Colonic mucosa (tissue), 4 donors: ENCODE measurements at regions of chr1 and their contacts with region 1.

Region 1: GRCh38 chr1:171583581-171584201 is 38.4 kb upstream of the MYOCOS start:
- DNase-seq: no peak
- H3K4me3 ChIP-seq: no peak overlapping the region
- H3K27ac ChIP-seq: no peak overlapping the region
- H3K4me1 ChIP-seq: no peaks in the 10 kb centered on the region
- H3K27me3 ChIP-seq: no peaks in the 10 kb centered on the region
- CTCF ChIP-seq: no peak

Region 2: DNA sequence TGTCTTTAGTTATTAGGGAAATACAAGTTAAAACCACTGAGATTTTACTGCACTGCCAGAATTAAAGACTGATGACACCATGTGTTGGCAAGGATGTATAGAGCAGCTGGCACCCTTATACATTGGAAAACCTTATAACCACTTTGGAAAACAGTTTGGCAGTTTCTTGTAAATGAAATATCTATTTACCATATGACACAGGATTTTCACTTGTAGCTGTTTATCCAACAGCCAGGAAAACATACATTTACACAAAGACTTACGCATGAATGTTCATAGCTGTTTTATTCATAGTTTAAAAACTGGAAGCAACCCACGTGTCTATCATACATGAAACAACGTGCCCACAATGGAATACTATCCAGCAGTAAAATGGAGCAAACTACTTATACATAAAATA is 53.0 kb before region 1 on chr1:
- intact Hi-C with region 1: loop called (anchors 10 kb)
- DNase-seq: no peak
- H3K4me3 ChIP-seq: no peak overlapping the region
- H3K27ac ChIP-seq: no peak overlapping the region
- H3K4me1 ChIP-seq: no peaks in the 10 kb centered on the region
- H3K27me3 ChIP-seq: no peaks in the 10 kb centered on the region
- CTCF ChIP-seq: no peak

Region 3: GRCh38 chr1:171754353-171754705 is 170.6 kb after region 1 on chr1:
- intact Hi-C with region 1: no loop called
- DNase-seq: no peak
- H3K4me3 ChIP-seq: no peak overlapping the region
- H3K27ac ChIP-seq: no peak overlapping the region
- H3K4me1 ChIP-seq: no peaks in the 10 kb centered on the region
- H3K27me3 ChIP-seq: no peaks in the 10 kb centered on the region
- CTCF ChIP-seq: no peak